A673 (cell line): ENCODE measurements at regions of chr2 and their contacts with region 1.

Region 1: DNA sequence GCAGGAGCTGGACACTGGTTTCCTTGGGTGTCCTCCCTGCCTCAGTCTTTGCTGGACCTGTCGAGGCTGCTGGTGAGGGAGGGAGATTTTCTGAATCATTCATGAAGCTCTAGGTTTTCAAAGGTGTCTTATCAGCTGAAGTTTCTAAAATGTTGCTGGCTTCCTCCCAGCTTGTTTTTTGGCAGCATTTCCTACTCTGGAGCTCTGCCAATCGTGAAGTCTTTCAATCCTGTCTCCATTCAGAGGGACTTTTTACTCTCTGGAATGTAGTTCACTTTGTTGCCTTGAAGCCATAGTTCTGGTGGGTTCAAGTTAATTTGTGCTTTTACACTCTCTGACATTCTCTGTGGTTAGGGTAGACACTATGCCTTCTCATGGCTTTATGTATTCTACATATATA is 23.9 kb downstream of the SNTG2 start:
- DNase-seq: peak; percentile 55
- H3K4me3 ChIP-seq: no peak overlapping the region
- H3K27ac ChIP-seq: no peak overlapping the region
- H3K4me1 ChIP-seq: peaks cover 13% of the 10 kb centered on the region
- H3K27me3 ChIP-seq: no peaks in the 10 kb centered on the region
- CTCF ChIP-seq: no peak

Region 2: DNA sequence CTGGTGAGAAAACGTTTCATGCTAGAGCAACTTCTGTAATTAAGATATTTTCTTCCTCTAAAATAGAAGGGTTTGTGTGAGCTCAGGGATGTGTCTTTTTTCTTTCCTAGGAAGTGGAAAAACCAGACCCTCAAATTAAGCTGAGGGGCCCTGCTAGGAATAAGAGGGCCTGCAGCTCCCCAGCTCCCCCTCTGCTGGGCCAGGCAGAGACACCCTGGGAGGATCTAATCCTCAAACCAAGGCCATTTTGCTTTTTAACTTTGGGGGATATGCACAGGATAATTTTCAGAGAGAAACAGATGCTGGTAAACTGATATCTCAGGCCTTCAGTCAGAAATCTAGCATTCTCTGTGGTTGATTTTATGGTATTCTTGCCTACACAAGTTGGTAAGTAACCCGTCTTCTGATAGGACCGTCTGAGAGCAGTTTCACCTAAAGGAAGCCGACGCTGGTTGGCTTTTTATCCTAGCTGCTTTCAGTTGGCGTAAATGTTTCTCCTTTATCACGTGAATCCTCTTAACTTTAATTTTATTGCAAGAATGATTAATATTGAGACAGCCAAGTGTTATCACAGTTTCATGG is 10.9 kb after region 1 on chr2:
- CTCF ChIA-PET with region 1: no interaction called
- POLR2A ChIA-PET with region 1: interaction called, 11 read pairs
- intact Hi-C with region 1: no loop called
- DNase-seq: no peak
- H3K4me3 ChIP-seq: no peak overlapping the region
- H3K27ac ChIP-seq: no peak overlapping the region
- H3K4me1 ChIP-seq: no peaks in the 10 kb centered on the region
- H3K27me3 ChIP-seq: no peaks in the 10 kb centered on the region
- CTCF ChIP-seq: no peak

Region 3: DNA sequence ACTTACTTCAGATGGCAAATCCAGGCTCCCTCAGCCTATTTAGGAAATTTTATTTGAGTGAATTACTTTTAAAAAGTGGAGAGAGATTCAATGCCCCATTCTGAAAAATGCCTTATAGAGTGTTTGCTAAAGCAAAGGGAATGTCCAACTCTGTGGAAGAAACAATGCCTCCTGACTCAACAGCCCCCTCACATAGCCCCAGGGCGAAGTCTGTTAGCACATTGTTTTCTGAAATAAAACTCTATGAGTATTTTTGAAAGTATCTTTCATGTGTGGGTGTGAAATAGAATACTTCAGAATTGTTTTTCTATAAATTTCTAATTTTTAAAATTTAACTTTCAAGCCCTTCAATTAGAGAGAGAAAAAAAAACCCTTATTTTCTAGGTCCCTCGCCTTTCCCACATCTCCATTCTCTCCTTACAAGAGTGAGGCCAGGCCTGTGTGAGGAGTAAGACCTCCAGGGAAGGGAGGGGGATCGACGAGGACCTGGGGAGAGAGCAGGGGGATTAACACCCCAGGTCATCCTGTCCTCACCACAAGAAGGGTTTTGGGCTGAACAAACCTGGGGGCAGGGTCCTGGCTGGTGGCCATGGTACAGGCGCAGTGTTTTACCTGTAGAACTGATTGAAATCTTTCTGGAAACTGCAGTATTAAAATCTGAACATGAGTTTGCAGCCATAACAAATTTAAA is 117.5 kb after region 1 on chr2:
- CTCF ChIA-PET with region 1: no interaction called
- POLR2A ChIA-PET with region 1: no interaction called
- intact Hi-C with region 1: no loop called
- DNase-seq: no peak
- H3K4me3 ChIP-seq: no peak overlapping the region
- H3K27ac ChIP-seq: no peak overlapping the region
- H3K4me1 ChIP-seq: no peaks in the 10 kb centered on the region
- H3K27me3 ChIP-seq: no peaks in the 10 kb centered on the region
- CTCF ChIP-seq: no peak

Region 4: DNA sequence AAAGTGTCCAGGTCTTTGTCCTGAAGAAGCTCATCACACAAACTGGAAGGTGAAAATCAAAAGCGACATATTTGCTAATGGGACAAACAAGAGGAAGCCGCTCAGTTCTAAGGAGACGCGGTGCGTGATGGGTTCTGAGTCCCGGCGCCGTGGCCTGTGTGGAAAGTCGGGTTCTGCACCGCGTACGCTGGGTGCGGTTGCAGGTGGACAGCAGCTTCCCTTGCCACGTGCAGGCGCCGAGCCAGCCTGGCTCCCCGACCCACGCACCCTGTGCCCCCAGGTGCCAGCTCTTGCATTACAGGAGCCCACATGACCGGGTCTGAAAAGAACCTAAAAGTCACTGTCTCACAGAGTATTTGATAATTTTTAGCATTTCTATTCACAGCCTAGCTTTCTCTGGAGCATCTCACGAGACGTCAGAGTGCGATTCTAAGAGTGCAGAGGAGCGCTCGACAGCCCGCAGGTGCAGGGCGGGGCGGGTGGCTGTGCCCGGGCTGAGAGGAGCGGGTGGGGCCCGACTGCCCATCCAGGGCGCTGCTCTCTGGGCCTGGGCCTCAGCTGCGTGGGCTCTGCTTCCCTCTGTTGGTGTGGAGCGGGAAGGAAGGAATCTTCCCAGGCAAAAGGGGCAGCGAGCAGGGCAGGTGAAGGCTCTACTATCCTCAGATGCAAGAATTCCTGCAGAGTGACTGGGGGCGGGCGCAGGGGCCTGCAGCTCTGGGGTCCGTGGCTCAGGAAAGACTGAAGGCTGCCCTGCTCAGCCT is 1317.2 kb after region 1 on chr2:
- CTCF ChIA-PET with region 1: no interaction called
- POLR2A ChIA-PET with region 1: no interaction called
- intact Hi-C with region 1: no loop called
- DNase-seq: no peak
- H3K4me3 ChIP-seq: no peak overlapping the region
- H3K27ac ChIP-seq: no peak overlapping the region
- H3K4me1 ChIP-seq: no peaks in the 10 kb centered on the region
- H3K27me3 ChIP-seq: no peaks in the 10 kb centered on the region
- CTCF ChIP-seq: peak; percentile 43